ENCODE measurements at regions of chr7 and their contacts with region 1.

Region 1: DNA sequence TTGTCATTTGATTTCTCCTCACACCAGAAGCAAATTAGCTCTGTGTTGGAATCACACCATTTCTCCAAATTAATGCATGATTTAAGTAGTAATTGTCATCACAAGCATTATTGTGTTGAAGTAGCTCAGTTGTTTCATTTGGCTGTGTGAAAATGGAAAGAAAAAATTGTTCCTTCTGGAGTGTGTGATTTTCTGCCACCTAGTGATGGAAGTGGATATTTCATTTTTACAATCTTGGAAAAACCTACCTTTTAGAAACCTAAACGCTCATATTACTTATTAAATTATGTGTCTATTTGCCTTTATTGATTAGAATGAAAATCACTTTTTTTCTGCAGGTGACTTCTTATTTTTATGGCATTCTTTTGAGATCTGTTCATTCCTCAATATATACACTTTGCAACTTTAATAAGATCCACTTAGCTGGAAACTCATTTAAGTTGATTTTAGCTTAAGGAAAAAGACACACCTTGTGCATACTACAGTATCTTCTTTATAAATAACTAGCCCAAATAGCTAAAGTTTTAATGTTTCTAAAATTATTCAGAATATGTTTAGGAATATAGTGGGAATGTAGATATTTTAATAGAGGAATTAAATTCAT is 50.0 kb downstream of the SRI start:
- DNase-seq: peak; percentile 15
- H3K4me3 ChIP-seq: no peak overlapping the region
- H3K27ac ChIP-seq: no peak overlapping the region
- H3K4me1 ChIP-seq: peaks cover 0 to 8% of the 10 kb centered on the region in 2 experiments; a peak in 2 of 4 replicates
- H3K27me3 ChIP-seq: no peaks in the 10 kb centered on the region
- CTCF ChIP-seq: peak; percentile 82
- EP300 ChIP-seq: no peak
- RAD21 ChIP-seq: peak; percentile 77

Region 2: DNA sequence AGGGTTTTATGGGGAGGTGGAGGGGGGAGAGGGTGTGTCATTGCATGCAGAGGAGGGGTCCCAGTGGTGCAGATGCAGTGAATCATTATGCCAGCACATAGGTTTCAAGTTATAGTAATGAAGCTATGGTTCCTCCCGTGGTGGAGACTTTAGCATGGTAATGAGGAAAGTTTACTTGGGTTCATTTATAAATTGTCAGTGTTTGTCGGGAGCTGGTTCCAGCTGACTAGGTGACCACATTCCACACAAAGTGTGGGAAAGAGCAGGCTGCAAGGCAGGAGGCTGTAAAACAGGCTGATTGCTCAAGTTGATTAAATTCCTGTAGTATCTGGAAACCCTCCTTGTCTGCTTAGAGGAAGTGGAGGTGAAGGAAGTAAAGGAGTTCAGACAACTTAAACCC is 28.9 kb before region 1 on chr7:
- CTCF ChIA-PET with region 1: interaction called, 10 read pairs
- POLR2A ChIA-PET with region 1: no interaction called
- DNase-seq: no peak
- H3K4me3 ChIP-seq: no peak overlapping the region
- H3K27ac ChIP-seq: no peak overlapping the region
- H3K4me1 ChIP-seq: peaks cover 0 to 7% of the 10 kb centered on the region in 2 experiments; a peak in 2 of 4 replicates
- H3K27me3 ChIP-seq: no peaks in the 10 kb centered on the region
- CTCF ChIP-seq: no peak
- EP300 ChIP-seq: no peak; a peak in 1 of 4 replicates
- RAD21 ChIP-seq: no peak

Region 3: DNA sequence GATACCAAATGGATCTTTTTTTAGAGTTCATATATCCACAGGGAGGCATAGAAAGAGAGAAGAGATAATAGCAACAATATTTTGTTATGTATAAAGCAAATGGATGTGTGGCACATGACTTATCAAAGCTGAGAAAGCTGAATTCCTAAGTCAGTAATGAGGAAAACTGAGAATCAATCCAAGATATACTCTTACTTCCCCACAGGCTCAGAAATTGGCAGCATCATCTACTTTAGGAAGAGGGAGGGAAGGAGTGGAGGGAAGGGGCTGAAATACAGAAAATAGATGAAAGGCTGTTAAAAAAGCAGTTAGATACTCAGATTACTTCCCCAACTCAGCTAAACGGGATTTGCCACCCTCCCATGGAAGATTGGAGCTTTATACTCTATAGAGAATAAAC is 13.5 kb before region 1 on chr7:
- CTCF ChIA-PET with region 1: interaction called, 24 read pairs
- POLR2A ChIA-PET with region 1: no interaction called
- DNase-seq: no peak
- H3K4me3 ChIP-seq: no peak overlapping the region
- H3K27ac ChIP-seq: no peak overlapping the region
- H3K4me1 ChIP-seq: peaks cover 0 to 1% of the 10 kb centered on the region in 2 experiments; a peak in 1 of 4 replicates
- H3K27me3 ChIP-seq: no peaks in the 10 kb centered on the region
- CTCF ChIP-seq: no peak
- EP300 ChIP-seq: no peak
- RAD21 ChIP-seq: no peak

Region 4: GRCh38 chr7:88184848-88185304 is 15.1 kb after region 1 on chr7:
- CTCF ChIA-PET with region 1: interaction called, 26 read pairs
- POLR2A ChIA-PET with region 1: no interaction called
- DNase-seq: no peak
- H3K4me3 ChIP-seq: no peak overlapping the region
- H3K27ac ChIP-seq: peak overlapping the region in 1 of 2 experiments; percentile 51; a peak in 2 of 4 replicates
- H3K4me1 ChIP-seq: peaks cover 3 to 8% of the 10 kb centered on the region in 2 experiments; a peak in 3 of 4 replicates
- H3K27me3 ChIP-seq: no peaks in the 10 kb centered on the region
- CTCF ChIP-seq: no peak
- EP300 ChIP-seq: no peak
- RAD21 ChIP-seq: no peak

Region 5: DNA sequence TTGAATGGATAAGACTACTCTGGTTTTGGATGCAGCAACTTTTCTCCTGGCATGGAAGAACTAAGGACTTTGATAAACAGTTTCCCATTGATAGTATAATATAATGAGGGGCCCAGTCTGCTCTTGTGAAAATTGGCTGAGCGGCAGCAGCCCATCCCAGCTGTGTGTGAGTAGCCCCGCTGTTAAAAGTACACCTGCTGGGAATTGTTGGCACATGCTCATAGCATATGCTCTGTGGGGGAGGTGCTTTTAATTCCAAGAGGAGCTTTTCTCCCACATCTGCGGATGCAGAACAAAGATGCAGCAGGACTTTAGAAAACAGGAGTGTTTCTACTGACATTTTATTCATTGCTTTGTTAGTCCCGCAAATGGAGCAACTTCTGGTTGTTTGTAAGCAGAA is 31.0 kb after region 1 on chr7:
- CTCF ChIA-PET with region 1: interaction called, 12 read pairs
- POLR2A ChIA-PET with region 1: no interaction called
- DNase-seq: no peak
- H3K4me3 ChIP-seq: no peak overlapping the region
- H3K27ac ChIP-seq: peak overlapping the region in 1 of 2 experiments; percentile 69; a peak in 2 of 4 replicates
- H3K4me1 ChIP-seq: peaks cover 0 to 10% of the 10 kb centered on the region in 2 experiments; a peak in 2 of 4 replicates
- H3K27me3 ChIP-seq: no peaks in the 10 kb centered on the region
- CTCF ChIP-seq: no peak
- EP300 ChIP-seq: no peak
- RAD21 ChIP-seq: no peak